ENCODE measurements at regions of chr5 and their contacts with region 1.

Region 1: GRCh38 chr5:168177831-168178450 is 113.5 kb upstream of the WWC1 start:
- DNase-seq: no peak
- H3K4me3 ChIP-seq: no peak overlapping the region
- H3K27ac ChIP-seq: no peak overlapping the region
- H3K4me1 ChIP-seq: no peaks in the 10 kb centered on the region
- H3K27me3 ChIP-seq: no peaks in the 10 kb centered on the region
- CTCF ChIP-seq: no peak
- POLR2A ChIP-seq: no peak

Region 2: GRCh38 chr5:167993771-167994170 is 184.2 kb before region 1 on chr5:
- intact Hi-C with region 1: no loop called
- DNase-seq: peak; percentile 13
- H3K4me3 ChIP-seq: no peak overlapping the region
- H3K27ac ChIP-seq: no peak overlapping the region
- H3K4me1 ChIP-seq: no peaks in the 10 kb centered on the region
- H3K27me3 ChIP-seq: no peaks in the 10 kb centered on the region
- CTCF ChIP-seq: no peak
- POLR2A ChIP-seq: no peak

Region 3: GRCh38 chr5:168086104-168086610 is 91.8 kb before region 1 on chr5:
- intact Hi-C with region 1: loop called (anchors 5 kb)
- DNase-seq: peak; percentile 86
- H3K4me3 ChIP-seq: no peak overlapping the region
- H3K27ac ChIP-seq: peak overlapping the region; percentile 47 to 73
- H3K4me1 ChIP-seq: peaks cover 10% of the 10 kb centered on the region
- H3K27me3 ChIP-seq: no peaks in the 10 kb centered on the region
- CTCF ChIP-seq: peak in 3 of 4 experiments; percentile 29 to 70 (median 62)
- POLR2A ChIP-seq: no peak

Region 4: DNA sequence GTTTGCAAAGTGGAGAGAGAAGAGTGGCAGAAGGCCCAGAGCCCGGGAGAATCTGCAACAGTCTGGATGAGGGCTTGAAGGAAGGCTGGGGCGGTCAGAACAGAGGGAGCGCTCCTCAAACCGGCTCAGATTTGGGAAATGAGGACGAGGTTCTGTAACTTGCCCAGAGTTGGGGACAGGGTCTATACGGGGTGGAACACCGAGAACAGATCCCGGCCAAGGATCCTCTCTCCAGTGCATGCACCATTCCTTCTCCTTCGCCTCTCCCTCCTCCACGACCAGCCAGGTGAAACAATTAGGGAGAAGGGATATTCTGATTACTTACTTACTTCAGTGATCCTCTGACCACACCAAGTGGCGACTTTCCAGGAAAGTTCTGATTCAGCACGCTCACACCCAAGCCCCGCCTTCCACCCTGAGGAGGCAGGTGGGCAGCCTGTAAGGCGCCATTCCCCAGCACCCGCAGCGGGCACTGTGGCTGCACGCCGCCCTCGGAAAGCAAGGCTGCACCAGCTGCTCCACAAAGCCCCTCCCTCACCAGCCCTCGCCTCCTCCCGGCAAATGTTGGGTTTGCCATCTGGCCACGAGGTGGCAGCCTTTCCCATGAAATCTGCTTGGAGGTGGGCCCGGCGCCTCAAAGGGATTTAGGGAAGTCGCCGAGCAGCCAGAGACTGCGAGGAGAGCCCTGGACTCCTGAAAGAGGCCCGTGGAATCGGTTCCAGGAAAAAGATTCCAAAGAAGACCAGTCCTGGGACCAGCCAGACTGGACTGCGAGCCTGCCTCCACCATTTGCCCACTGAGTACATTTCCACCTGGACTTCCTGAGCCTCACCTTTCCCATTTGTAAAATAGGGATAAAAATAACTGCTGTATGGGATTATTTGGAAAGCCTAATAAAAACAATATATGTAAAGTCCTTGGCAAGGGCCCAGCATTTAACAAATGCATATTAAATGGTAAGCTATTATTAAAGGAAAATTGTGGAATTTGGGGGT is 91.3 kb after region 1 on chr5:
- intact Hi-C with region 1: no loop called
- DNase-seq: peak; percentile 93
- H3K4me3 ChIP-seq: peak overlapping the region; percentile 20 to 28
- H3K27ac ChIP-seq: peak overlapping the region; percentile 60 to 64
- H3K4me1 ChIP-seq: no peaks in the 10 kb centered on the region
- H3K27me3 ChIP-seq: no peaks in the 10 kb centered on the region
- CTCF ChIP-seq: peak; percentile 86 to 98 (median 93)
- POLR2A ChIP-seq: peak; percentile 39

Measured in prostate gland (tissue), 2 donors.